MCF 10A (cell line): ENCODE measurements at regions of chr16 and their contacts with region 1.

Region 1: GRCh38 chr16:87062569-87063442 is 254.4 kb downstream of the C16orf95 start:
- DNase-seq: peak; percentile 77
- H3K4me3 Mint-ChIP-seq: peak overlapping the region; percentile 53
- H3K27ac Mint-ChIP-seq: no peak overlapping the region
- H3K4me1 Mint-ChIP-seq: no peaks in the 10 kb centered on the region
- H3K27me3 Mint-ChIP-seq: no peaks in the 10 kb centered on the region
- CTCF ChIP-seq: peak; percentile 84

Region 2: DNA sequence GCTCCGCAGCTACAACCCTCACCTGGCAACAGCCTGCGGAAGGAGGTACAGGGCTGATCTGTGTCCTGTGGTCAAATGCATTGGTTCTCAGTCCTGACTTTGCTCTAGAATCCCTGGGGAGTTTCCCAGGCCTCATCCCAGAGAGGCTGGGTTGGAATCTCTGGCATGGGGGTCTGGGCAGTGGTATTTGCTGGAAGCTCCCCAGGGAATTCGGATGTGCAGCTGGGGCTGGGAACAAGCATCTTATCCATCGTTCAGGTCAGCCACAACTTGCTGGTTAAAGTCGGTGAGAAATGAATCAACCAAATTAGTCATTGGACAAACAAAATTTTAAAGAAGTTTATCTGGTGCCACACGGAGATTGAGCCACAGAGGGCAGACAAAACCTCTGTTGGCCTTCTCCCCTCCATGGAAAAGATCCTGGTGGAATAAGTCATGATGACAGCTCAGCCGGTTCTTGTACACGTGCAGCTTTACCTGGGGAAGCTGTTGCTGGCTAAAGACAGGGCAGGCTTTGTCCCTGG is 253.3 kb before region 1 on chr16:
- CTCF ChIA-PET with region 1: no interaction called
- POLR2A ChIA-PET with region 1: no interaction called
- intact Hi-C with region 1: loop called (anchors 2 kb)
- DNase-seq: peak; percentile 75
- H3K4me3 Mint-ChIP-seq: no peak overlapping the region
- H3K27ac Mint-ChIP-seq: no peak overlapping the region
- H3K4me1 Mint-ChIP-seq: peaks cover 9% of the 10 kb centered on the region
- H3K27me3 Mint-ChIP-seq: no peaks in the 10 kb centered on the region
- CTCF ChIP-seq: peak; percentile 27

Region 3: DNA sequence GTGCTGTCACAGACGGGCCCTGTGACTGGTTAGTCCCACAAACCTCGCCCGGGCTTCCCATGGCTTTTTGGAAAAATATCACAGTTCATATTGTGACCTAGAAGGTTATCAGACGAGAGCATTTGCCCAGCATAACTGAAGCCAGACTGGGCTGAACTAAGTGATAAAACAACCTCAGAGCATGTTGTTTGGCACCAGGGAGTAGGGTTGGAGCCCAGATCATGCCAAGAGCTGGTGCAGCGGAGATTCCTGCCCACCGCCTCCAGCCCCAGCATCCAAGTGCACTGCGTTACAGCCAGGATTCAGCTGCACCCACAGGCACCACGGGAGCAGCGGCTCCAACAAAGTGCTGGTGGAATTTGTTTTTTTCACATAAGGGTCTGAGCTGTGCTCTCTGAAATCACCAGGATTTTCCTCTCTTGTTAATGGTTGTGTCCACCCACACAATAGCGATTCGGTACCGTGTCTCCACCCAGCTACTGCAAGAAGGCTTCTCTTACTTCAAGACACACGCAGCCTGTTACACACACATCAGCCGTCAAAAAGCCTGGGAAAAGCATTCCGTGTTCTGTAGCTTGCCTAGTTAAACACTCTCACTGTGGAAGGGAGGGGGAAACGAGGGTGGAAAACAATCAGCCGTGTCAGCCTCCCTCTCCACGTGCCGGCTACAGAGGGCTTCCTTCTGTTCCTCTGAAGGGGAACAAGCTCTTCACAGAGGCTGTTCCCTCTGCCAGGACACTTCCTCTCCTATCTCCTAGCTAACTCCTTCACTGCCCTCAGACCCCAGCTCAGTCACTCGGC is 19.4 kb before region 1 on chr16:
- CTCF ChIA-PET with region 1: interaction called, 17 read pairs
- POLR2A ChIA-PET with region 1: no interaction called
- intact Hi-C with region 1: no loop called
- DNase-seq: no peak
- H3K4me3 Mint-ChIP-seq: no peak overlapping the region
- H3K27ac Mint-ChIP-seq: no peak overlapping the region
- H3K4me1 Mint-ChIP-seq: no peaks in the 10 kb centered on the region
- H3K27me3 Mint-ChIP-seq: peaks cover 10% of the 10 kb centered on the region
- CTCF ChIP-seq: no peak

Region 4: GRCh38 chr16:87266846-87267245 is 204.0 kb after region 1 on chr16:
- CTCF ChIA-PET with region 1: interaction called, 10 read pairs
- POLR2A ChIA-PET with region 1: no interaction called
- intact Hi-C with region 1: no loop called
- DNase-seq: no peak
- H3K4me3 Mint-ChIP-seq: no peak overlapping the region
- H3K27ac Mint-ChIP-seq: no peak overlapping the region
- H3K4me1 Mint-ChIP-seq: peaks cover 11% of the 10 kb centered on the region
- H3K27me3 Mint-ChIP-seq: no peaks in the 10 kb centered on the region
- CTCF ChIP-seq: no peak